PC-9 (cell line): ENCODE measurements at regions of chr5 and their contacts with region 1.

Region 1: DNA sequence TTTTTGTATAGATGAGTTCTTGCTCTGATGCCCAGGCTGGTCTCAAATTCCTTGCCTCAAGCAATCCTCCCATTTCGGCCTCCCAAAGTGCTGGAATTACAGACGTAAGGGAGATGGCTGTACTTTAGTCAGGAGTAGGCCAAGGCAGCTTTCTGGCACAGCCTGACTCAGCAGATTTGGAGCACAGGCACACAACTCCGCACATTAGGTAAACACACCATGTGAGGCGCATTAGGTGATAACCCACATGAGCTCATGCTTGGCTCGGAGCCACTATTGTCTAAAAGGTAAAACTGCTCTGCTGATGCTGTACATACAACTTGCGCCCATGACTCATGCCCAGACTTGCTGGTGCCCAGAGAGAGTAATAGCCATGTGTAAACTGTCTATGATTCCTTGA is 1157.9 kb downstream of the TAF11L14 start:
- DNase-seq: peak; percentile 53 to 61
- H3K4me3 ChIP-seq: no peak overlapping the region
- H3K27ac ChIP-seq: no peak overlapping the region
- H3K4me1 ChIP-seq: no peaks in the 10 kb centered on the region; the same call in 1 of the 2 replicates
- H3K27me3 ChIP-seq: no peaks in the 10 kb centered on the region
- CTCF ChIP-seq: no peak

Region 2: DNA sequence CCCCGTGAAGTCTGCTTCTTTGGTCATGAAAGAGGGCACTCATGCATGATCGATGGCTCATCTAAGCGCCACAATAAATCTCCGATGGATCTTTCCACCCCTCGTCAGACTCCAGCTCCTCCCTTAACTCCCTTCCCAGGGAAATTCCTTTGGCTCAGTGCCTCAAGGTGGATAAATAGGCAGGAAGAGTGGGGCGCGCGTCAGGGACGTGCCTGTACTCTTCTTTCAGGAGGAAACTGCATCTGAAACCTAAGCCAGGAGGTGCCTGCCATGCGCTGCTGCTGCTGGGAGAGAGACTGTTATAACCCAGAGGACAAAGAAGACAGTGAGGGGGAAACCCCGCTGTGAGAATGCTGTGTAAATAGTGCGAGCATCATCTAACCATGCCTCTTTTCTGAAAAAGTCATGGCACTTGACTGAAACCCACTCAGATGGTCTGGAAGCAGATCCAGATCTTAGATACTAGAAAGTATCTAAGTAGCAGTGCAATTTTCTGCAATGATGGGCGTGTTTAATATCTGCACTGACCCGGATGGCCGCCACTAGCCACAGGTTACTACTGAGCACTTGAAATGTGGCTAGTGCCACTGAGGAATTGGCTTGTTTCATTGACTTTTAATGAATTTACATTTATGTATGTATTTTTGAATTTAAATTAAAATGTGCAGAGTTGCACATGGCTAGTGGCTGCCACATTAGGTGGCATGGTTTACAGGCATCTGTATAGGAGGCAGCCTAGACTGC is 1695.0 kb before region 1 on chr5:
- CTCF ChIA-PET with region 1: no interaction called
- POLR2A ChIA-PET with region 1: no interaction called
- intact Hi-C with region 1: no loop called
- DNase-seq: no peak
- H3K4me3 ChIP-seq: no peak overlapping the region
- H3K27ac ChIP-seq: no peak overlapping the region
- H3K4me1 ChIP-seq: no peaks in the 10 kb centered on the region
- H3K27me3 ChIP-seq: no peaks in the 10 kb centered on the region
- CTCF ChIP-seq: no peak

Region 3: DNA sequence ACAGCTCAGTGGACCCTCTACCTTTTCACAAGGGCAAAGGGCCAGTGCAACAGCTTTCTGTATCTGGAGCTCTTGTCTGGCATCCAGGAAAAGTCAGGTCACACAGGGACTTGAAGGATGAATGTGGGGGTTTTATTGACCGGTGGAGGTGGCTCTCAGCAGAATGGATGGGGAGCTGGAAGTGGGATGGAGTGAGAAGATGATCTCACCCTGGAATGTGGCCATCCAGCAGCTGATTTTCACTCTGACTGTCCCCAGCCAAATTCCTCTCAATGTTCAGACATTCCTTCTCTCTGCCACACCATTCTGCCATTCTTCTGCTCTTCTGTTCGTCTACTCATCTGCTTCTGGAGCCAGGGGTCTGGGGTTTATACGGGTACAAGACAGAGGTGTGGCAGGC is 37.9 kb before region 1 on chr5:
- CTCF ChIA-PET with region 1: no interaction called
- POLR2A ChIA-PET with region 1: no interaction called
- intact Hi-C with region 1: no loop called
- DNase-seq: no peak
- H3K4me3 ChIP-seq: no peak overlapping the region
- H3K27ac ChIP-seq: no peak overlapping the region
- H3K4me1 ChIP-seq: no peaks in the 10 kb centered on the region
- H3K27me3 ChIP-seq: no peaks in the 10 kb centered on the region
- CTCF ChIP-seq: no peak

Region 4: GRCh38 chr5:18807256-18808149 is 15.4 kb after region 1 on chr5:
- CTCF ChIA-PET with region 1: no interaction called
- POLR2A ChIA-PET with region 1: no interaction called
- intact Hi-C with region 1: no loop called
- DNase-seq: no peak
- H3K4me3 ChIP-seq: no peak overlapping the region
- H3K27ac ChIP-seq: no peak overlapping the region
- H3K4me1 ChIP-seq: no peaks in the 10 kb centered on the region
- H3K27me3 ChIP-seq: no peaks in the 10 kb centered on the region
- CTCF ChIP-seq: no peak

Region 5: GRCh38 chr5:18829539-18829938 is 37.4 kb after region 1 on chr5:
- CTCF ChIA-PET with region 1: no interaction called
- POLR2A ChIA-PET with region 1: no interaction called
- intact Hi-C with region 1: no loop called
- DNase-seq: no peak
- H3K4me3 ChIP-seq: no peak overlapping the region
- H3K27ac ChIP-seq: no peak overlapping the region
- H3K4me1 ChIP-seq: no peaks in the 10 kb centered on the region
- H3K27me3 ChIP-seq: no peaks in the 10 kb centered on the region
- CTCF ChIP-seq: no peak

Region 6: DNA sequence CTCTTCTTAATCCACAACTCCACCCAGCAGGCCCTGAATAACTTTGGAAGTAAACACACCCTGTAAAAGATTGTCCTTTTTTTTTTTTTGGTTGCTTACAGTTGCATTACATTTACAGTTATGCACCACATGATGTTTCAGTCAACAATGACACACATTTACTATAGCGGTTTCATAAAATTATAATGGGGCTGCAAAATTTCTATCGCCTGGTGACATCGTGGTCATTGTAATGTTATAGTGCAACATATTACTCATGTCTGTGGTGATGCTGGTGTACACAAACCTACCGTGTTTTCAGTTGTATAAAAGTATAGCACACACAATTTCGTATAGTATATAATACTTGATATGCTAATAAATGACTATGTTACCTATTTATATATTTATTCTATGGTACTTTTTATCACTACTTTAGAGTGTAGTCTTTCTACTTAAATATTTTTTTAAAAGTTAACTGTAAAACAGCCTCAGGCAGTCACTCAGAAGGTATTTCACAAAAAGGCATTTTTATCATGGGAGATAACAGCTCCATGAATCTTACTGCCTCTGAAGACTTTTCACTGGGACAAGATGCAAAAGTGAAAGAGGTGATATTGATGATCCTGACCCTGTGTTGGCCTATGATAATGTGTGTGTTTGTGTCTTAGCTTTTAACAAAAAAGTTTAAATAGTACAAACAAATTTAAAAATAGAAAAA is 1891.2 kb after region 1 on chr5:
- CTCF ChIA-PET with region 1: no interaction called
- POLR2A ChIA-PET with region 1: interaction called, 15 read pairs
- intact Hi-C with region 1: no loop called
- DNase-seq: no peak
- H3K4me3 ChIP-seq: no peak overlapping the region
- H3K27ac ChIP-seq: no peak overlapping the region
- H3K4me1 ChIP-seq: peaks cover 10% of the 10 kb centered on the region
- H3K27me3 ChIP-seq: no peaks in the 10 kb centered on the region
- CTCF ChIP-seq: no peak